ENCODE measurements at regions of chr10 and their contacts with region 1.

Region 1: GRCh38 chr10:99548041-99548530 is 15.3 kb downstream of the NKX2-3 start:
- DNase-seq: no peak
- ATAC-seq: peak in 1 of 4 donors; percentile 22
- H3K4me3 ChIP-seq: no peak overlapping the region
- H3K27ac ChIP-seq: no peak overlapping the region
- H3K4me1 ChIP-seq: no peaks in the 10 kb centered on the region
- H3K27me3 ChIP-seq: peaks cover 4 to 89% (median 28%) of the 10 kb centered on the region in 9 donors
- CTCF ChIP-seq: peak in 3 of 12 donors; percentile 6 to 21 (median 10)
- POLR2A ChIP-seq: no peak

Region 2: DNA sequence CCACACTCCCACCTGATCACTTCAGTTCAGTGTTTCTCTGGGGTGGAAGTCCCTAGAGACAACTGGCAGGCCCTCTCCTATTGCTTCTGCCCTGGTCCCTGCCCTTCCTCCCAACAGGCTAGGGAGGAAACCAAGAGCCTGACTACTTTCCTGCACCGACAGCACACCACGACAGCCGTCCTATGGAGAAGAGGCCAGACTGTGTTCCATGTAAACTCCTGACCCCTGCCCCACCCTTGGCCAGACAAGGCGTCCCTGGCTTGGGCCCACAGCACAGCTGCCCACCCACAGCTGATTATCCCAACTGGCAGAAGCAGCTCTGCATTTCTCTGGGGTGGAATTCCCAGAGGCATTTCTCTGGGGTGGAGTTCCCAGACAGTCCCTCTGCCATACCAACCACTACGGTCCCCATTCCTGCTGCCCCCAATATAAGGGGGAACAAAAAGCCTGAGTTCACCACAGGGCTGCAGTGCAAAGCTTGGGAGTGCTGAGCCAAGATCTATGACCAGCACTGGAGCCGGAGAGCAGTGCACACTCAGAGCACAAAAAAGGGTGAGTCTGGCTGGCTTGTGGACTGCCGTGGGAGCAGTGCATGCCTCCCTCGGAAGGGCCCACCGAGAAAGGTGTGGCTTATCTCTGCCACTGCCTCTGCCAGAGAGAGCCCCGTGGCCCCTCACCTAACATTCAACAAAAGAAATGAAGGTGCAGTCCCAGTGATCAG is 505.9 kb before region 1 on chr10:
- intact Hi-C with region 1: no loop called
- DNase-seq: no peak
- ATAC-seq: no peak
- H3K4me3 ChIP-seq: no peak overlapping the region
- H3K27ac ChIP-seq: no peak overlapping the region
- H3K4me1 ChIP-seq: no peaks in the 10 kb centered on the region
- H3K27me3 ChIP-seq: no peaks in the 10 kb centered on the region
- CTCF ChIP-seq: no peak
- POLR2A ChIP-seq: no peak

Region 3: GRCh38 chr10:99450624-99451498 is 97.2 kb before region 1 on chr10:
- intact Hi-C with region 1: loop called in 1 of 10 experiments (anchors 10 kb)
- DNase-seq: no peak
- ATAC-seq: peak in 2 of 4 donors; percentile 50 to 54
- H3K4me3 ChIP-seq: no peak overlapping the region
- H3K27ac ChIP-seq: no peak overlapping the region
- H3K4me1 ChIP-seq: peaks cover 0 to 3% (median 0%) of the 10 kb centered on the region in 12 donors
- H3K27me3 ChIP-seq: peaks cover 0 to 57% (median 4%) of the 10 kb centered on the region in 9 donors
- CTCF ChIP-seq: no peak
- POLR2A ChIP-seq: no peak